ENCODE measurements at regions of chr1 and their contacts with region 1.

Region 1: DNA sequence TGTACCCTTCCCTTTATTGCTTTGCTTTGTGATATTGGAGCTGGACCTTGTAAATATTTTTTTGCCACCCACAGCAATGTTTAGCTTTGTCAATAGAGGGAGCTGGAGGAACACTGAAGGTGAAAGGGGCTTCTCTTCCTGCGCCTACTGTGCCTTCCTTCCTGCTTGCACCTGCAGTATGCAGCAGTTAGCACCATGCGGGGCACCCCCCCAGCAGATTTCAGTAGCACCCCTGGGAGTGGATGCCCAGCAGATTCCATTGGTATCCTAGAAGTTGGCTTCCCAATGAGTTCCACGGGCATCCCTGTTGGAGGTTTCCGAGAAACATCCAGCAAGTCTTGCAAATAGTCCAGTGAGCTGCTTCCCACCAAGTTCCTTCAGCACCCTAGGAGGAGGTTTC is 25.6 kb downstream of the S100A10 start:
- DNase-seq: peak; percentile 55
- H3K4me3 Mint-ChIP-seq: no peak overlapping the region
- H3K27ac Mint-ChIP-seq: no peak overlapping the region
- H3K4me1 Mint-ChIP-seq: peaks cover 19% of the 10 kb centered on the region
- H3K27me3 Mint-ChIP-seq: no peaks in the 10 kb centered on the region

Region 2: GRCh38 chr1:151846062-151846568 is 121.9 kb before region 1 on chr1:
- CTCF ChIA-PET with region 1: no interaction called
- POLR2A ChIA-PET with region 1: no interaction called
- intact Hi-C with region 1: no loop called
- DNase-seq: peak; percentile 67
- H3K4me3 Mint-ChIP-seq: peak overlapping the region; percentile 7
- H3K27ac Mint-ChIP-seq: peak overlapping the region; percentile 86
- H3K4me1 Mint-ChIP-seq: peaks cover 44% of the 10 kb centered on the region
- H3K27me3 Mint-ChIP-seq: no peaks in the 10 kb centered on the region

Region 3: GRCh38 chr1:151984313-151984956 is 16.4 kb after region 1 on chr1:
- CTCF ChIA-PET with region 1: interaction called, 587 read pairs
- POLR2A ChIA-PET with region 1: interaction called, 8 read pairs
- intact Hi-C with region 1: loop called (anchors 1 kb)
- DNase-seq: peak; percentile 74
- H3K4me3 Mint-ChIP-seq: peak overlapping the region; percentile 24
- H3K27ac Mint-ChIP-seq: peak overlapping the region; percentile 85
- H3K4me1 Mint-ChIP-seq: peaks cover 67% of the 10 kb centered on the region
- H3K27me3 Mint-ChIP-seq: no peaks in the 10 kb centered on the region

Region 4: GRCh38 chr1:151993654-151994496 is 25.8 kb after region 1 on chr1 and contains the start of gene S100A10:
- CTCF ChIA-PET with region 1: interaction called, 587 read pairs
- POLR2A ChIA-PET with region 1: no interaction called
- intact Hi-C with region 1: loop called (anchors 1 kb)
- DNase-seq: peak; percentile 83
- H3K4me3 Mint-ChIP-seq: peak within 1 kb of the TSS; percentile 94
- H3K27ac Mint-ChIP-seq: peak within 1 kb of the TSS; percentile 90
- H3K4me1 Mint-ChIP-seq: peaks cover 47% of the 10 kb centered on the region
- H3K27me3 Mint-ChIP-seq: no peaks in the 10 kb centered on the region
- total RNA-seq, gene S100A10: 257 to 270 TPM

Region 5: DNA sequence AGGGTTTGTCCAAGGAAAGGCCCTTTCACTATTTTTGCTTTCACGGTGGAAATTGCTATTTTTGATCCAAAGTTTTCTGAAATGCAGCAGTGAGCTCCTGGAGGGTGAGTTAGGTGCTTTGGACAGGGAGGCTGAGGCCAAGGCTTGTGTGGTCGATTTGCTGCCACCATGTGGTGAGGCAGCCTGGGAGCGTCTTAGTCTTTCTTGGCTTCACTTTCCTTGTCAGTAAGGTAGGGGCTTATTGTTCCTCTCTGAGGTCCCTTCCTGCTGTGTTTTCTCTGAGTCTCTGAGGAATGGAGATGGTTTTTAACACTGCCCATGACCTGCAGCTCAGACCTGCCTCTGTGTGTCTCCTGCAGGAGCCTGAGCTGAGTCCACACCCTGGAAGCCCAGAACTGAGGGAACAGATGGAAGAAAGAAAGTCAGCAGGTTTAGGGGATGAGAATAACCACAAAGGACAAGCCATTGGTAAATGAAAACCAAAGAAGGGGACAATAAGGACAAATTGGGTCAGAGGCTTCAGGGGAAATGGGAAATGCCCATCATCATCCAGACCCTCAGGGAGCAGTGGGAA is 45.7 kb after region 1 on chr1:
- CTCF ChIA-PET with region 1: interaction called, 36 read pairs
- POLR2A ChIA-PET with region 1: no interaction called
- intact Hi-C with region 1: loop called (anchors 1 kb)
- DNase-seq: peak; percentile 71
- H3K4me3 Mint-ChIP-seq: no peak overlapping the region
- H3K27ac Mint-ChIP-seq: no peak overlapping the region
- H3K4me1 Mint-ChIP-seq: peaks cover 4% of the 10 kb centered on the region
- H3K27me3 Mint-ChIP-seq: peaks cover 10% of the 10 kb centered on the region

Region 6: DNA sequence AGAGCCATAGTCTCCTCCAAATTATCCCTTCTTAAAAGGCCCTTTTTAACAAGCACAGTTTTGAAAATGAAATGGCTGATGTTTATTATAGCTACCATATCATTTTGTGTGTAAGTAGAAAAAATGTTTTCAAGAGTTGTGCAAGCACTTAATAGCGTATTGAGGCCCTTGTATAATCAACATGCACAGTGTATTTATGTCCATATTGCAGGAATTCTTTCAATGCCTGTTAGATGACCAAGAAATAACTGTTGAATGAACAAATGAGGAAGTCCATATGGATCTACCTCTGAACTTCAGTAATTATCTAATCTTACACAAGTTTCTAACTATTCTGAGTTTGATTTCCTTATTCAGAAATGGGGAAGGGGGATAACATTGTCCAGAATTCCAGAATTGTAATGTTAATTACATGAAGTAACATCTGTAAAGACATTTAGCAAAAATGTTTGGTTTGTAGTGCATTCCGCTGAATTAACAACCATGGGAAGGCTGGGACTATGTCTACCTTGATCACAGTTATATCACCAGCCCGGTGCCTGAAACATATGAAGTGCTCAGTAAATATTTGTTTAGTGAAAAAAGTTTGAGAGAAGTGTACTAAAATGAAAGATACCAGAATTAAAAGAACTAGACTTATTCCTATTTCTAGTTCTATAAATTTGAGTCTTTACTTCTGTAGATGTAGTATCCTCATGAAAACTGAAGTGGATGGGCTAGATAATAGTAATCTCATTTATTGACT is 128.2 kb after region 1 on chr1:
- CTCF ChIA-PET with region 1: no interaction called
- POLR2A ChIA-PET with region 1: no interaction called
- intact Hi-C with region 1: no loop called
- DNase-seq: no peak
- H3K4me3 Mint-ChIP-seq: no peak overlapping the region
- H3K27ac Mint-ChIP-seq: no peak overlapping the region
- H3K4me1 Mint-ChIP-seq: no peaks in the 10 kb centered on the region
- H3K27me3 Mint-ChIP-seq: peaks cover 39% of the 10 kb centered on the region